GM10248 (cell line): ENCODE measurements at regions of chr2 and their contacts with region 1.

Region 1: DNA sequence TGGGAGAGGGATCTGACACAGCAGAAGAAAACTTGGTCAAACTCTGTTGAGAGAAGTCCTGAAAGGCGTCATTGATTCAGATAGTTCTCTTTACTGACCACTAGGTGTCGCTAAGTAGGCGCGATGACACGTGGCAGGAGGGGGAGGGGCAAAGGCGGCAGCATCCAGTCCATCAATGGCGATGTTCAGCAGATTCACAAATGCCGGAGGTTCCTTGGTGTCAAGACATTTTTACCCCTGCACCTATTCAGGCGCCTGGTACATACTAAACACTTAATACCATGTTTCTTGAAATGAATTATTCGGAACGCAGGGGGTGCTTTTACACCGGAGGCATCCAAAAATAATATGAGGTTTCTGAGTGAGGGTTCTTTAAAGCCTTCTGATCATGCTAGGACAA is 3.0 kb upstream of the PLEK start:
- DNase-seq: peak; percentile 73
- CTCF ChIP-seq: peak; percentile 76

Region 2: GRCh38 chr2:68345129-68345875 is 16.8 kb before region 1 on chr2:
- CTCF ChIA-PET with region 1: interaction called, 16 read pairs
- POLR2A ChIA-PET with region 1: no interaction called
- DNase-seq: no peak
- CTCF ChIP-seq: no peak

Region 3: DNA sequence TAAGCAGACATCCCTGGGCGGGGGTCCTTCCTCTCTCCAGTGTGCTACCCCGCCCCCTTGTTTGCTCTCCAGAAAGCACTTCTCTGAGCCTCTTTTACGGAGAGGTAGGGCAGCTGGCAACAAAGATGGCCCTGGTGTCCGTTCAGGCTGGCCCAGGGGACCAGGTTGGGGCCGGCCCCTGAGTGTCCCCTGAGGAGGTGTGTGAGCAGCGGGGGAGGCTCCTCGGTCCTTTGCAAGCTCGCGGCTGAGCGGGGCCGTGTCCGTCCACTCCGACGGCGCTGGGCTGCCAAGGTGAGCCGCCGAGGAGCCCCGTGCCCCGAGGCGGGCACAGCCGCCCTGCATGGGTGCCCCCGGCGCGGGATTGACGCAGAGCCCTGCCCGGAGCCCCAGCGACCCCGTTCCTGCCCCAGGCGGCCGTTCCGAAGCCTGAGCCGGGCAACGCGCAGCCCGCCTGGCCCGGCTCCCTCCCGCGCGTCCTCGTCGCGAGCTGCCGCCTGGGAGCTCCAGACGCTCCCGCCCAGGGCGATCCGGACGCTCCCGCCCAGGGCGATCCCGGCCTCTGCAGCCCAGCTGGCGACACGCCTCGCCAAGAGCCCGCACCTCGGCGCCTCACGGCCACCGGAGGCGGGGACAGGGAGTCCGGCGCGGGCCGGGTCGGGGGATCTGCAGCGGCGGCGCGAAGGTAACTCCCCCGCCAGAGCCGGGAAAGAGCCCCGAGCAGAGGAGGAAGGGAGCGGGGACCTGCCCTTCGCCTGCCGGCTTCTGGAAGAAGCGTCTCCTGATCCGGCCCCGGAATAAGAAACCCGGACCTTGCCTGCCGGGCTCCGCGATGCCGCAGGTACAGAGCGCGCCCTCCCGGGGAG is 281.2 kb after region 1 on chr2 and contains the start of gene PROKR1:
- CTCF ChIA-PET with region 1: no interaction called
- POLR2A ChIA-PET with region 1: no interaction called
- DNase-seq: no peak
- CTCF ChIP-seq: no peak